Activated naive CD4-positive, alpha-beta T cell treated with anti-CD3 and anti-CD28 coated beads for 36 hours (primary cell): ENCODE measurements at regions of chr20 and their contacts with region 1.

Region 1: DNA sequence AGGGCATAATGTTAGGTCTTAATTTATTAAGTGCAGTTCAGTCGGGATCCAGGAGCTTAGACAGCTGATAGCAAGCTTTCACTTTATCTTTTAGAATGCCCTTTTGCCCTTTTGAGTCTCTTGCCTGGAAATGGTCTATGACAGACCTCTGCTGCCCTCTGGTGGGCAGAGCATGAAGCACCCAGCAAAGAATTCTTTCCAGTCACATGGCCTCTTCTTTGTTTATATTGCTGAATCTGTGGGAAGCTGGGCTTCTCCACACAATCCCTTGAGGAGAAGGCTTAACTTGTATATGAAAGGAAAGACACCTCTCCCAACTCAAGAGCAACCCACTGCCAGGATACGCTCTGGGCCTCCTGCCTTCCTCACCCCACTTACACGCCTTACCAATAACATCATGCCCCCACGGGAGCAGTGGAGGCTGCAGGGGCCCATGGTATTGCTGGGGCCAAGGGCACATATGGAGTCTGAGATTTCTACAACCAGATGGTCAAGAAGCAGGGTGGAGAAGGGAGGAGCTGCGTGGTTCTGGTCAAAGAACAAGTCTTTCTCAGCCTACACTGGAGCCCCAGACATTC is 20.4 kb downstream of the WFDC3 start:
- DNase-seq: peak; percentile 88
- H3K4me3 Mint-ChIP-seq: no peak overlapping the region
- H3K27ac Mint-ChIP-seq: no peak overlapping the region
- H3K4me1 Mint-ChIP-seq: peaks cover 3% of the 10 kb centered on the region
- H3K27me3 Mint-ChIP-seq: peaks cover 3% of the 10 kb centered on the region

Region 2: GRCh38 chr20:45456632-45457031 is 314.6 kb before region 1 on chr20:
- CTCF ChIA-PET with region 1: interaction called, 31 read pairs
- intact Hi-C with region 1: loop called (anchors 1 kb)
- DNase-seq: peak; percentile 74
- H3K4me3 Mint-ChIP-seq: no peak overlapping the region
- H3K27ac Mint-ChIP-seq: no peak overlapping the region
- H3K4me1 Mint-ChIP-seq: no peaks in the 10 kb centered on the region
- H3K27me3 Mint-ChIP-seq: no peaks in the 10 kb centered on the region

Region 3: DNA sequence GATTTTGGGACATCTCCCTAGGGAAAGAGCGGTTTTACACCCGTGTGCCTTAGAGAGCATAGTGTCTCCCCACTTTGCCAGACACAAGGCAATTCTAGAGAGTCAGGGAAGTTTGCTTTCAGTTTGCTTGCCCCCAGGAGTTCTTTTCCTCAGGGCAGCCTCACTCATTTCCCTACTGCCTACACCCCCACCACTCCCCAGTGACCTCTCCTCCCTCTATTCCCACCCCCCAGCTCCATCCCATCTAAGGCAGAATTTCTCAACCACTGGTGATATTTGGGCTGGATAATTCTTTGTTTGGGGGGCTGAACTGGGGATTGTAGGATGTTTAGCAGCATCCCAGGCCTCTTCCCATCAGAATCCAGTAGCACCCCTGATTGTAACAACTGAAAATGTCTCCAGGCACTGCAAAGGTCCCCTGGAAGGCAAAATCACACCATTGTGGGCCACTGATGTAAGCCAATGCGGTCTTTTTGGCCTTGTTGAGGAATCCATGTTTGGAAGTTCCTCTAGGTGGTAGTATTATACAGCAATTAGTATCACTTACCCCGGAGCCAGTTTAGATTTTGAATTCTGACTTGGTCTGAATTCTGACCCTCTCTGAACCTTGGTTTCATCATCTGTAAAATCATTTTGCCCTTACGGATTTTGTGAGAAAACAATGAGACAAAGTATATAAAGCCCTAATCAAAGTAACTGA is 225.4 kb before region 1 on chr20:
- CTCF ChIA-PET with region 1: interaction called, 5 read pairs
- intact Hi-C with region 1: loop called (anchors 1 kb)
- DNase-seq: no peak
- H3K4me3 Mint-ChIP-seq: no peak overlapping the region
- H3K27ac Mint-ChIP-seq: no peak overlapping the region
- H3K4me1 Mint-ChIP-seq: no peaks in the 10 kb centered on the region
- H3K27me3 Mint-ChIP-seq: peaks cover 34% of the 10 kb centered on the region

Region 4: DNA sequence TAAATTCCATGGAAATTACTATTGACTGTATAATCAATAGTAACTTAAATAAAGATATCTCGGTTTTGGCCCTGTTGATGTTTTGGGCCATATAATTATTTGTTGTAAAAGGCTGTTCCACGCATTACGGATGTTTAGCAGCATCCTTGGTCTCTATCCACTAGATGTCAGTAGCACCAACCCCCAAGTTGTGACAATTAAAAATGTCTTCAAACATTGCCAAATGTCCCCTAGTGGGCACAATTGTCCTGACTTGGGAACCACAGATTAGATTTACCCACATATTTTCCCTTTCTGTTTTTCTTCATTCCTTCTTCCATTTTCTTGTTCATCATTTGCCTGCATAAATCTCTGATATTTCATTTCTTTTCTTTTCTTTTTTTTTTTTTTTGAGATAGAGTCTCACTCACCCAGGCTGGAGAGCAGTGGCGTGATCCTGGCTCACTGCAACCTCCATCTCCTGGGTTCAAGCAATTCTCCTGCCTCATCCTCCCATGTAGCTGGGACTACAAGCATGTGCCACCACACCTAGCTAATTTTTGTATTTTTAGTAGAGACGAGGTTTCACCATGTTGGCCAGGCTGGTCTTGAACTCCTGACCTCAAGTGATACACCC is 178.6 kb before region 1 on chr20:
- CTCF ChIA-PET with region 1: interaction called, 38 read pairs
- intact Hi-C with region 1: loop called (anchors 1 kb)
- DNase-seq: peak; percentile 56
- H3K4me3 Mint-ChIP-seq: no peak overlapping the region
- H3K27ac Mint-ChIP-seq: no peak overlapping the region
- H3K4me1 Mint-ChIP-seq: no peaks in the 10 kb centered on the region
- H3K27me3 Mint-ChIP-seq: peaks cover 20% of the 10 kb centered on the region

Region 5: GRCh38 chr20:45629496-45630100 is 141.7 kb before region 1 on chr20 and contains the start of gene WFDC10A:
- CTCF ChIA-PET with region 1: interaction called, 37 read pairs
- intact Hi-C with region 1: loop called (anchors 1 kb)
- DNase-seq: peak; percentile 53
- H3K4me3 Mint-ChIP-seq: no peak within 1 kb of the TSS
- H3K27ac Mint-ChIP-seq: no peak within 1 kb of the TSS
- H3K4me1 Mint-ChIP-seq: peaks cover 2% of the 10 kb centered on the region
- H3K27me3 Mint-ChIP-seq: peaks cover 24% of the 10 kb centered on the region
- total RNA-seq, gene WFDC10A: not detected

Region 6: DNA sequence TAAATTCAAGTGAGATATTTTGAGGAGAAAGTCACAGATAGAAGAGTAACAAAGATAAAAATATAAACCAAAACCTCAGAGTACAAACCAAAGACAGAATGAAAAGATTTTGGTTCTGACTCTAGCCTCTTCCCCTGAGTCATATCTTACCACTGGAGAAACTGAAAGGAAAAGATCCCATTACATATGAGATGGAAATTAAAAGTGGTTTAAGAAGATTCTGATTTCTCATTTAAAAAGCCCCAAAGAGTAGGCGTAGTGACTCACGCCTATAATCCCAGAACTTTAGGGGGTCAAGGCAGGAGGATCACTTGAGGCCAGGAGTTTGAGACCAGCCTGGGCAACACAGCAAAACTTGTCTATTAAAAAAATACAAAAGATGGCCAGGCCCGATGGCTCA is 18.5 kb before region 1 on chr20:
- CTCF ChIA-PET with region 1: interaction called, 20 read pairs
- intact Hi-C with region 1: no loop called
- DNase-seq: peak; percentile 53
- H3K4me3 Mint-ChIP-seq: no peak overlapping the region
- H3K27ac Mint-ChIP-seq: no peak overlapping the region
- H3K4me1 Mint-ChIP-seq: peaks cover 26% of the 10 kb centered on the region
- H3K27me3 Mint-ChIP-seq: peaks cover 16% of the 10 kb centered on the region

Region 7: GRCh38 chr20:45792332-45792686 is 21.0 kb after region 1 on chr20:
- CTCF ChIA-PET with region 1: interaction called, 16 read pairs
- intact Hi-C with region 1: no loop called
- DNase-seq: no peak
- H3K4me3 Mint-ChIP-seq: peak overlapping the region; percentile 86
- H3K27ac Mint-ChIP-seq: peak overlapping the region; percentile 63
- H3K4me1 Mint-ChIP-seq: peaks cover 9% of the 10 kb centered on the region
- H3K27me3 Mint-ChIP-seq: no peaks in the 10 kb centered on the region

Region 8: GRCh38 chr20:46215913-46216707 is 444.8 kb after region 1 on chr20:
- CTCF ChIA-PET with region 1: no interaction called
- intact Hi-C with region 1: no loop called
- DNase-seq: no peak
- H3K4me3 Mint-ChIP-seq: no peak overlapping the region
- H3K27ac Mint-ChIP-seq: no peak overlapping the region
- H3K4me1 Mint-ChIP-seq: no peaks in the 10 kb centered on the region
- H3K27me3 Mint-ChIP-seq: peaks cover 17% of the 10 kb centered on the region